ENCODE measurements at regions of chr22 and their contacts with region 1.

Region 1: GRCh38 chr22:19629720-19630419 is 84.4 kb upstream of the SEPTIN5 start:
- DNase-seq: peak; percentile 71 to 90 (median 80)
- H3K4me3 ChIP-seq: no peak overlapping the region
- H3K27ac ChIP-seq: no peak overlapping the region
- H3K4me1 ChIP-seq: no peaks in the 10 kb centered on the region
- H3K27me3 ChIP-seq: peaks cover 8% of the 10 kb centered on the region
- CTCF ChIP-seq: peak; percentile 83 to 93 (median 89)
- POLR2A ChIP-seq: no peak

Region 2: GRCh38 chr22:18929459-18929858 is 700.4 kb before region 1 on chr22:
- intact Hi-C with region 1: no loop called
- DNase-seq: peak in 1 of 7 donors; percentile 12
- H3K4me3 ChIP-seq: no peak overlapping the region
- H3K27ac ChIP-seq: no peak overlapping the region
- H3K4me1 ChIP-seq: no peaks in the 10 kb centered on the region
- H3K27me3 ChIP-seq: no peaks in the 10 kb centered on the region
- CTCF ChIP-seq: no peak
- POLR2A ChIP-seq: no peak

Region 3: DNA sequence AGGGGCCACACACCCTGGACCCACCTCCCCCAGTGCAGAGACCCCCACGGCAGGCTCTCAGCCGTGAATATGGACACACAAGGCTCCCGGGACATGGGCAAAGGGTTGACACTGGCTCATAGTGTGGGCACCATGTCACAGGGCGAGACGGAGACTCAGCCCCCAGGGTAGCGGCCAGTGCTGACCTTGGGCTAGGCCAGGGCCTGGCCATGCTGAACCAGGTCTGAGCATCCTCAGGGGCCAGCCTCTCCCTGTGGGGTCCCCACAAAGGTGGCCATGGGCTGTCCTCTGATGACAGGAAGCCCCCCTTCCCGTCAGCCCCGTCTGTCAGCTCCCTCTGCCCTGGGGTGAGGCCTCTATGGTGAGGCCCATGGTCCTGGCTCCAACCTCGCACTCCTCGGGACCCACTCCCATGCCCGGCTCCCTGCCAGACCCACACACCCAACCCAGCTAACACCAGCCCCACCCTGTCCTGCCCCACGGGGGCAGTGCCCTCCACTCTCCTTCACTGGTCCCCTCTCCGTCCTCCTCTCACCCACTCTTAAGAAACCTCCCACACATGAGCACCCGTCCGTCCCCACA is 674.8 kb before region 1 on chr22:
- intact Hi-C with region 1: loop called in 1 of 2 experiments (anchors 5 kb)
- DNase-seq: peak in 1 of 7 donors; percentile 10
- H3K4me3 ChIP-seq: no peak overlapping the region
- H3K27ac ChIP-seq: no peak overlapping the region
- H3K4me1 ChIP-seq: no peaks in the 10 kb centered on the region
- H3K27me3 ChIP-seq: no peaks in the 10 kb centered on the region
- CTCF ChIP-seq: no peak
- POLR2A ChIP-seq: no peak

Region 4: GRCh38 chr22:19143967-19144400 is 485.9 kb before region 1 on chr22:
- intact Hi-C with region 1: loop called in 1 of 2 experiments (anchors 10 kb)
- DNase-seq: peak in 1 of 7 donors; percentile 12
- H3K4me3 ChIP-seq: peak overlapping the region in 3 of 4 donors; percentile 47 to 70 (median 62)
- H3K27ac ChIP-seq: peak overlapping the region in 4 of 5 donors; percentile 29 to 81 (median 58)
- H3K4me1 ChIP-seq: peaks cover 7 to 10% of the 10 kb centered on the region in 2 donors
- H3K27me3 ChIP-seq: peaks cover 11% of the 10 kb centered on the region
- CTCF ChIP-seq: no peak
- POLR2A ChIP-seq: no peak

Region 5: DNA sequence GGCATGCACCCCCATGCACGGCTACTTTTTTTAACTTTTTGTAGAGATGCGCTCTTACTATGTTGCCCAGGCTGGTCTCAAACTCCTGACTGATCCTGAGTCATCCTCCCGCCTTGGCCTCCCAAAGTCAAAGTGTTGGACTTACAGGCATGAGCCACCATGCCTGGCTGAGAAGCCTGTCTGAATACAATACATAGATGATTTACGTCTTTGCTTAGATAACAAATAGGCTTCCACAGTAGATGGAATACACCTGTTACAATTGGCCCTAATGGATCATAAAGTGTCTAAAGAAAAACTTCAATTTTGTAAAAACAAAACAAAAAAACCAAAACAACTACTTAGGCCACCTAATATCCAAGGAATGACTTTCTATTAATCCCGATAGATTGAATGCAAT is 325.3 kb before region 1 on chr22:
- intact Hi-C with region 1: loop called in 1 of 2 experiments (anchors 5 kb)
- DNase-seq: no peak
- H3K4me3 ChIP-seq: no peak overlapping the region
- H3K27ac ChIP-seq: no peak overlapping the region
- H3K4me1 ChIP-seq: no peaks in the 10 kb centered on the region
- H3K27me3 ChIP-seq: no peaks in the 10 kb centered on the region
- CTCF ChIP-seq: no peak
- POLR2A ChIP-seq: no peak

Region 6: DNA sequence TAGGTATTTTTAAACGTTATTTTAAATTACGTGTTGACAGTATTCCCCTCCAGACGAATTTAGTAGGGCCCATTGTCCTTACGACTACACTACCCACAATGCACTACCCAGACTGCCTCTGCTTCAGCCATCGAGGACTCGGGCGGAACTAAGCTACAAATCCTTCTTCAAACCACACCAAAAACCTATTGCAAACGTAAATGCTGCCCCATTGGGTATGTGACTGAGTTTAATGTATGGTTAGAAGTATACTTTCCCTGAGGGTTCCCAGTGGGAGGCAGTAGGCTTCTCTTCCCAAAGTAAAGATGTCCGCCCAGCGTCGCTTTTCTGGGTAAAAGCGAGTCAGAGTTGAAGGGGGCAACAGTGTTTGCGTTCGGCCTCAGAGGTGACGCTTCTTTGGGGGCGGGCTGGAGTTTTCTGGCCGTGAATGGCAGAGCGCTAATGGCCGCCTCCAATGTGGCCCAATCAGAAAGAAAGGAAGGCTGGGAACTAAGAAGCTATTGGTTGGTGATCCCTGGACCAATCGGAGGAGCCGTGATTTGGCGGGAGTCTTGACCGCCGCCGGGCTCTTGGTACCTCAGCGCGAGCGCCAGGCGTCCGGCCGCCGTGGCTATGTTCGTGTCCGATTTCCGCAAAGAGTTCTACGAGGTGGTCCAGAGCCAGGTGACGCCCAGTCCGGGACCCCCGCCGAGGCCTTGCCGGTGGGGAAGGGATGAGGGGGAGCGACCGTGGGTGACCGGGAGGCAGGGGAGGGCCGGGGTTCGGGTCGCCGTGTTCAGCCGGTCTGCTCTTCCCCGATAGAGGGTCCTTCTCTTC is 150.3 kb before region 1 on chr22 and contains the start of gene CDC45:
- intact Hi-C with region 1: loop called in 1 of 2 experiments (anchors 10 kb)
- DNase-seq: peak; percentile 95 to 99 (median 97)
- H3K4me3 ChIP-seq: peak within 1 kb of the TSS; percentile 10 to 91 (median 75)
- H3K27ac ChIP-seq: peak within 1 kb of the TSS; percentile 94 to 100 (median 98)
- H3K4me1 ChIP-seq: peaks cover 15 to 21% of the 10 kb centered on the region in 2 donors
- H3K27me3 ChIP-seq: no peaks in the 10 kb centered on the region
- CTCF ChIP-seq: no peak
- POLR2A ChIP-seq: no peak
- total RNA-seq, gene CDC45: 0.87 to 7.7 (median 1.2) TPM in 8 of 9 donors, not detected in the other

Region 7: DNA sequence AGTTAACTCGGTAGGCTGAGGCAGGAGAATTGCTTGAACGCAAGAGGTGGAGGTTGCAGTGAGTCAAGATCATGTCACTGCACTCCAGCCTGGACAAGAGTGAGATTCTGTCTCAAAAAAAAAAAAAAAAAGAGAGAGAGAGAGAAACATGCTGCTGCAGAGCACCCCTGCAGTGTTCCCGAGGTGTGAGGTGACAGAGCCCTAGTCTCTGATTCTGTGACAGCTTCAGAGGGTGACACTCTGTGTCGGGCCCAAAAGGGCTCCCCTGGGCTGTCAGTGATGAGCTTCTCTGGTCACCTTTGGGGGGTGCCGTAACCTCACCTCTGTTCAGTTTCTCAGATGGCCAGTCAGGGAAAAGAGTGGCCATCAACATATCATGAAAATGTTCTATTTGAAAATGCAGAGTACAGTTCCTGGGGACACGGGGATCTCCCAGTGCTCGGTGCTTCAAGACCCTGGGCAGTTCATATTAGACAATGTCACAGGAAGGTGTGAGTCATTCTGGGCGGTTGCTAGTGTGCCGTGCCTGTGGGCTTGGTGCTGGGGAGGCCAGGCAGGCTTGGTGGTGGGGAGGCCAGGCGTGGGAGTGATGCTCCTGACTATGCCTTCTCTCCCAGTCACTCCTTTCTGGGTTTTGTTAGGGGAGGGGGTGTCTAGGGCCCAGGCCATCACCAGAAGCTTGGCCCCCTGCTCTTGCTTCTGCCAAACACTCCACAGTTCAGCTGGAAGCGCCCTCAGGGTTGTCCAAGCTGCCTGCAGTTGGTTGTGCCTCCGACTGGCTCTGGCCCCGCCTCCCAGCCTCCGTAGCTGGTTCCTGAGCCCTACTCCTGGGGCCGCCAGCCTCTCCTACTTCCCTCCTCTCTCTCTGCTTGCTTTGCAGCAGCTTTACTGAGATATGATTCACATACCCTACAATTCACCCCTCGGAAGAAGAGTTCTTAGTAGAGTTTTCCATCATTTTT is 53.1 kb before region 1 on chr22:
- intact Hi-C with region 1: no loop called
- DNase-seq: peak in 2 of 7 donors; percentile 21 to 31
- H3K4me3 ChIP-seq: no peak overlapping the region
- H3K27ac ChIP-seq: no peak overlapping the region
- H3K4me1 ChIP-seq: no peaks in the 10 kb centered on the region
- H3K27me3 ChIP-seq: no peaks in the 10 kb centered on the region
- CTCF ChIP-seq: no peak
- POLR2A ChIP-seq: no peak

Measured in adrenal gland (tissue), 19 donors.